A549 (cell line): ENCODE measurements at regions of chr11 and their contacts with region 1.

Region 1: GRCh38 chr11:17230867-17231851 is 23.4 kb upstream of the PIK3C2A start:
- DNase-seq: no peak
- ATAC-seq: no peak
- H3K4me3 ChIP-seq: no peak overlapping the region
- H3K27ac ChIP-seq: no peak overlapping the region
- H3K4me1 ChIP-seq: no peaks in the 10 kb centered on the region
- CTCF ChIP-seq: no peak
- EP300 ChIP-seq: no peak
- POLR2A ChIP-seq: no peak
- RAD21 ChIP-seq: no peak

Region 2: DNA sequence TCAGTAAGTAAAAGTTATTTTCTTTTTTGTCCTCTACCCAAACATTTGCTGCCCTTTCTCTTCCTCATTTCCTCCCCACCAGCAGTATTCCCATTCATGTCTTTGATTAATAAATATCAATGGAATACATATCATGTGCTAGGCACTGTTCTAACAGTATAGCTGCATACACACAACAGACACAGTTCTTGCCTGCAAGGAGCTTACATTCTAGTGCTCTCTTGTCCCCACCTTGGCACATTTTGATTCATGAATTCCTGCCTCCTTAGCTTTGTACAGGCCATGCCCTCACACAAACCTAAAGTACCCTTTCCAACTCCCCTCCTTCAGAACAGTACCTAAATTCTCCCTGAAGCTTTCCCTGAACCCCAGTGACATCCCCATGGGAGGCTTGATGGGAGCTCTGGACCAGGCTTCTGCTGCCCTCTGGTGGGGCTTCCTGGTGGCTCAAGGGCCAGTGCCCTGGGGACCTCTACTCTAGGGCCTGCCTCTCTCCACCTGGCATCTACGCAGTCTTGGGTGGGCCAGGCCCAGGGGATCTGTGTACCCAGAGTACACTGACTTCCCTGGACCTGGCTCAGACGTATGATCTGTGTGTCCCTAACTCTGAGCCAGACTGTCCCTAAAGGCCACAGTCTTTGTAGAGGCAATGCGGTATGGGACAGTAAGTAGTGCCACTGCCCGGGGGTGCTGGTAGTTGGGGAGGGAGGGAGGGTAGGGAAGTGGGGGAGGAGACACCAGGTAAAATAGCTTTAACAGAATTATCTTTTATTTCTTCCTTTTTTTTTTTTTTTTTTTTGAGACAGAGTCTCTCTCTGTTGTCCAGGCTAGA is 167.8 kb before region 1 on chr11:
- CTCF ChIA-PET with region 1: no interaction called
- POLR2A ChIA-PET with region 1: no interaction called
- DNase-seq: peak; percentile 54 to 57
- ATAC-seq: peak; percentile 99
- H3K4me3 ChIP-seq: no peak overlapping the region
- H3K27ac ChIP-seq: no peak overlapping the region
- H3K4me1 ChIP-seq: no peaks in the 10 kb centered on the region
- CTCF ChIP-seq: peak; percentile 89
- EP300 ChIP-seq: no peak
- POLR2A ChIP-seq: no peak
- RAD21 ChIP-seq: peak; percentile 95 to 96

Region 3: DNA sequence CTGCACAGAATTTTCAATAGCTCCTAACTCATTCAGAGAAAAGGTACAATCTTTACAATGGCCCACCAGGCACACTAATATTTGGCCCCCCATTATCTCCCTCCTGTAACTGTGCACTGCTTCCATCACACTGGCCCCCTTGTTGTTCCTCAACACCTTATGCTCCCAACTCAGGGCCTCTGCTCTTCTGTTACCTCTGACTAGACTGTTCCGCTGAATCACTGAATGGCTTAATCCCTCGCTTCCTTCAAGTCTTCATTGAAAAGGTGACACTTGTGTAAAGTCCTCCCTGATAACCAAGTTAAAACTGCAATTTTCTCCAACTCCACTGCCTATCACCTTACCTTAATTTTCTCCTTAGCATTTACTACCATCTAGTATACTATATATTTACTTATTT is 45.2 kb before region 1 on chr11:
- CTCF ChIA-PET with region 1: interaction called, 10 read pairs
- POLR2A ChIA-PET with region 1: no interaction called
- DNase-seq: no peak
- ATAC-seq: no peak
- H3K4me3 ChIP-seq: no peak overlapping the region
- H3K27ac ChIP-seq: no peak overlapping the region
- H3K4me1 ChIP-seq: no peaks in the 10 kb centered on the region
- CTCF ChIP-seq: no peak
- EP300 ChIP-seq: no peak
- POLR2A ChIP-seq: no peak
- RAD21 ChIP-seq: no peak

Region 4: GRCh38 chr11:17244046-17244445 is 12.9 kb after region 1 on chr11:
- CTCF ChIA-PET with region 1: interaction called, 13 read pairs
- POLR2A ChIA-PET with region 1: no interaction called
- DNase-seq: no peak
- ATAC-seq: 0 out of 6 replicates have a peak, but pooled peaks of 1 of the 2 experiments have one; percentile 30
- H3K4me3 ChIP-seq: no peak overlapping the region
- H3K27ac ChIP-seq: no peak overlapping the region
- H3K4me1 ChIP-seq: no peaks in the 10 kb centered on the region
- CTCF ChIP-seq: no peak
- EP300 ChIP-seq: no peak
- POLR2A ChIP-seq: no peak
- RAD21 ChIP-seq: no peak

Region 5: GRCh38 chr11:17256512-17256911 is 25.4 kb after region 1 on chr11:
- CTCF ChIA-PET with region 1: interaction called, 14 read pairs
- POLR2A ChIA-PET with region 1: no interaction called
- DNase-seq: peak in 1 of 2 experiments; percentile 58
- ATAC-seq: peak; percentile 88 to 93
- H3K4me3 ChIP-seq: no peak overlapping the region
- H3K27ac ChIP-seq: peak overlapping the region; percentile 56 to 84; a peak in 5 of 6 replicates
- H3K4me1 ChIP-seq: peaks cover 28% of the 10 kb centered on the region
- CTCF ChIP-seq: no peak
- EP300 ChIP-seq: no peak
- POLR2A ChIP-seq: no peak
- RAD21 ChIP-seq: no peak

Region 6: DNA sequence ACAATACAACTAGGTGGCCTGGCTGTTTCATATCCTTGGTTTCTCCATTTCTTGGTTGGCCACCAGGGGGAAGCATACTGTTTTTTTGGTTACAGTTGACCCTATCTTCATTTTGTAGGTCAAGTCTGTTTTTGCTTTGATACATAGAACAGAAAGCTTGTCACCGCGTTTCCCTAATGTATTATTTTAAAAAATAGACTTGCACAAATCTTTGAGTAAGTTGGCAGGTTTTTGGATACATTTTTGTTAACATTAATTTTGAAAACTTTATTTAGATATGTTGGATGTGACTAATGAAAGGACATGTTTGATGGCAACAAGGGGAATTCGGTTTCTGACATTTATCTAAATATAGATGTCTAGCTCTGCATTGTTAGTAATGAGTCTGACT is 123.4 kb after region 1 on chr11:
- CTCF ChIA-PET with region 1: interaction called, 15 read pairs
- POLR2A ChIA-PET with region 1: interaction called, 3 read pairs
- DNase-seq: peak; percentile 80 to 84
- ATAC-seq: peak in 1 of 2 experiments; percentile 55; a peak in 3 of 6 replicates
- H3K4me3 ChIP-seq: peak overlapping the region; percentile 51; the same call in 2 of the 3 replicates
- H3K27ac ChIP-seq: no peak overlapping the region
- H3K4me1 ChIP-seq: no peaks in the 10 kb centered on the region; the same call in 2 of the 3 replicates
- CTCF ChIP-seq: peak; percentile 81
- EP300 ChIP-seq: no peak
- POLR2A ChIP-seq: no peak
- RAD21 ChIP-seq: peak in 1 of 2 experiments; percentile 44; a peak in 3 of 5 replicates